T-cell (primary cell): ENCODE measurements at regions of chr17 and their contacts with region 1.

Region 1: GRCh38 chr17:65056262-65056638 is 290 bp downstream of the GNA13 start:
- DNase-seq: no peak
- ATAC-seq: peak; percentile 14 to 22 (median 20)
- H3K4me3 ChIP-seq: peak overlapping the region; percentile 90 to 96
- H3K4me3 Mint-ChIP-seq: peak overlapping the region; percentile 93 to 98 (median 97)
- H3K27ac ChIP-seq: peak overlapping the region; percentile 97
- H3K27ac Mint-ChIP-seq: peak overlapping the region; percentile 97 to 98
- H3K4me1 ChIP-seq: peaks cover 10 to 32% of the 10 kb centered on the region in 2 experiments
- H3K4me1 Mint-ChIP-seq: peaks cover 44 to 53% (median 47%) of the 10 kb centered on the region in 3 donors
- H3K27me3 ChIP-seq: peaks cover 0 to 5% of the 10 kb centered on the region in 2 experiments
- H3K27me3 Mint-ChIP-seq: no peaks in the 10 kb centered on the region

Region 2: DNA sequence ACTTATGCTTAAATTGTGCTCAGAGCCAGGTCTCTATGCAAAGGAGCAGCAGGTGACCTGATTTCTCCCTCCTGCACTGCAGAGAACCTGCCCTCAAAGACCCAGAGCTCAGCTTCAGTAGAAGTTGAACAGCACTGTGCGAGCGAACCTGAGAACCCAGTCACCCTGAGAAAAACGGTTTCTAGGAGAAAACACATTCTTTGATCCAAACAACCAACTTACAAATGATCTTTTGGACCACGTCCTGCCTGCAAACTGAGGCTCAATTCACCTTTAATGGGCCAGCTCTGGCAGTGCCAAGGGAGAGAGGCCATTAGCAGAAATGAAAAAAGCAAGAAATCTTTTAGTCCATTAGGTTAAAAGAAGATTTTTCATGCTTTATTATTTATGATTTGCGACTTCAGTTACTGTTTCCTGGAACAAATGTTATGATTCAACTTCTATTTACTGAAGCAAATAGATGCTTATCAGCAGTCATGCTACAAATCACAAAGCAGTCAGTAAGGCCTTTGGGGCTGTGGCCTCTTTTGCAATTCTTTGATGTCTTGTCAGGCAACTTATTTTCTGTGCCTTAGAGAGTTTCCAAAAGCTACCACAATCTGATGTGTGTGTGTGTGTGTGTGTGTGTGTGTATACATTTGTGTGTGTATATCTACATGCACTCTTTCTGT is 71.3 kb before region 1 on chr17:
- CTCF ChIA-PET with region 1: interaction called in 1 of 2 experiments, 3 read pairs
- POLR2A ChIA-PET with region 1: interaction called in 1 of 2 experiments, 13 read pairs
- DNase-seq: peak; percentile 9 to 82 (median 55)
- ATAC-seq: peak; percentile 58 to 78 (median 76)
- H3K4me3 ChIP-seq: peak overlapping the region in 1 of 2 donors; percentile 34
- H3K4me3 Mint-ChIP-seq: peak overlapping the region; percentile 69 to 83 (median 82)
- H3K27ac ChIP-seq: peak overlapping the region; percentile 98
- H3K27ac Mint-ChIP-seq: peak overlapping the region; percentile 99 to 100
- H3K4me1 ChIP-seq: peaks cover 23 to 41% of the 10 kb centered on the region in 2 experiments
- H3K4me1 Mint-ChIP-seq: peaks cover 36 to 57% (median 43%) of the 10 kb centered on the region in 3 donors
- H3K27me3 ChIP-seq: no peaks in the 10 kb centered on the region
- H3K27me3 Mint-ChIP-seq: no peaks in the 10 kb centered on the region

Region 3: DNA sequence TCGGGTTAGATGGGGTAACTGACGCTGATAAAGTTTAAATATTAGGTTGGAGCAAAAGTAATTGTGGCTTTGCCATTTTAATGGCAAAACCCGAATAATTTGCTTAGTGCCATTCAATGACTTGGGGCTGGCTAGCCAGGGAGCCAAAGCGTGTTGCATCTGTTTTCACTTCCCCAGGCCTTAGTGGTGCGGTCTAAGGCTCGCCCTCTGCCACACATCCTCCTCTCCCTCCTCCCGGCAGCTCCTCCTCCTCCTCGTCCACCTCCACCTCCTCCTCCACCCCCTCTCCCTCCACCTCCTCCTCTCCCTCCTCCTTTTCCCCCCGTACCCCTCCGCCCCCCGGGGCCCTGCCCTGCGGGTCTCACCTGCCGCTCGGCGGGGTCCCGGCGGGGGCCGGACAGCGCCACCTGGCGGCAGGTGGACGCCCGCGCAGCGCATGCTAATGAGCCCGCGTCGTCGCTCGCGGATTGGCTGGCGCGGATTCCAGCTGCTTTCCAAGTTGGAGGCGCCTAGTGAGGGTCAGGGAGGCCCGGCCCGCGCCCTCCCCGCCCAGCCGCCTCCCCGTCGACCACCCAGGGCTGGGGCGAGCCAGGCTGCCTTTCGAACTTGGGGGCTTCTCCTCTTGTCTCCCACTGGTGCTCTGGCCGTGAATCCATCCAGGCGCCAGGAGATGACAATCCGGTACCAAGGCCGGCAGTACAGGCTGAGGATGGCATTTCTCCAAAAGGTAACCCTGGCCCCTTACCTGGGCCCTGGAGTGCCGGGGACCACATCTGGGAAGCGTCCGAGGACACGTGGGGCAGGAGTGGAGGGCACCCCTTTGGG is 44.3 kb after region 1 on chr17:
- CTCF ChIA-PET with region 1: interaction called in 1 of 2 experiments, 12 read pairs
- POLR2A ChIA-PET with region 1: interaction called in 1 of 2 experiments, 4 read pairs
- DNase-seq: peak; percentile 59 to 91 (median 74)
- ATAC-seq: peak; percentile 91 to 95 (median 92)
- H3K4me3 ChIP-seq: peak overlapping the region; percentile 46 to 60
- H3K4me3 Mint-ChIP-seq: peak overlapping the region; percentile 74 to 87 (median 78)
- H3K27ac ChIP-seq: peak overlapping the region; percentile 71
- H3K27ac Mint-ChIP-seq: peak overlapping the region; percentile 87 to 93
- H3K4me1 ChIP-seq: peaks cover 3 to 17% of the 10 kb centered on the region in 2 experiments
- H3K4me1 Mint-ChIP-seq: peaks cover 15 to 32% (median 22%) of the 10 kb centered on the region in 3 donors
- H3K27me3 ChIP-seq: peaks cover 0 to 4% of the 10 kb centered on the region in 2 experiments
- H3K27me3 Mint-ChIP-seq: no peaks in the 10 kb centered on the region

Region 4: DNA sequence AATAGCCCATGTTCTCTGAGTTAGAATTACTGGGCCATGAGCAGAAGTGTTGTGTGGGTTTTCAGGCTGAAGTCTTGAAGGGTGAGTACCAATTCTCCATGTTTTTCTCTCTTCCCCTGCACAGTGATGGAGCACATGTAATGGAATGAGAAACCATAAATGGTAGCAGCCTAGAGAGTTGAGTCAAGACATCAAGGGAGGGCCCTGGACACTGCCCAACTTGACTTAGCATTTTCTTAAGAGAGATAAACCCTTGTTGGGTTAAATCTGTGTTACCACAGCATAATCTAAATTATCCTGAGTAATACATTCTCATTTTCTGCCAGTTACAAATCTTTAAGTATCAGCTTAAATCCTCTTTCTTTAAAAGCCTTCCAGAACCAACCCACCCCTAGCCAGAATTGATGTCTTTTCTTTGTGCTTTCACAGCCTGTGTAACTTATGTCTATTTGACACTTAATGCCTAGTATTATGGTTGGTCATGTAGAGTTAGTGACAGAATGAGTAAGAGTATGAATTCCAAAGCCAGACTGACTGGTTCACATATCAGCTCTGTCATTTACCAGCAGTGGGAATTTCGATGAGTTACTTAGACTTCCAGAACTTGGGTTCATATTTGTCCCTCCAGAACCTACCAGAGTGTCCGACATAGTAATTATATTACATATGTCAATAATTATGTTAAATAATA is 53.9 kb after region 1 on chr17:
- CTCF ChIA-PET with region 1: no interaction called
- POLR2A ChIA-PET with region 1: interaction called in 1 of 2 experiments, 11 read pairs
- DNase-seq: no peak
- ATAC-seq: no peak
- H3K4me3 ChIP-seq: no peak overlapping the region
- H3K4me3 Mint-ChIP-seq: no peak overlapping the region
- H3K27ac ChIP-seq: no peak overlapping the region
- H3K27ac Mint-ChIP-seq: no peak overlapping the region
- H3K4me1 ChIP-seq: no peaks in the 10 kb centered on the region
- H3K4me1 Mint-ChIP-seq: no peaks in the 10 kb centered on the region
- H3K27me3 ChIP-seq: peaks cover 0 to 4% of the 10 kb centered on the region in 2 experiments
- H3K27me3 Mint-ChIP-seq: peaks cover 0 to 14% of the 10 kb centered on the region in 2 donors

Region 5: GRCh38 chr17:65401561-65401960 is 345.3 kb after region 1 on chr17:
- CTCF ChIA-PET with region 1: no interaction called
- POLR2A ChIA-PET with region 1: no interaction called
- DNase-seq: no peak
- ATAC-seq: no peak
- H3K4me3 ChIP-seq: no peak overlapping the region
- H3K4me3 Mint-ChIP-seq: no peak overlapping the region
- H3K27ac ChIP-seq: no peak overlapping the region
- H3K27ac Mint-ChIP-seq: no peak overlapping the region
- H3K4me1 ChIP-seq: no peaks in the 10 kb centered on the region
- H3K4me1 Mint-ChIP-seq: peaks cover 5 to 11% (median 11%) of the 10 kb centered on the region in 3 donors
- H3K27me3 ChIP-seq: peaks cover 0 to 9% of the 10 kb centered on the region in 2 experiments
- H3K27me3 Mint-ChIP-seq: peaks cover 4 to 8% of the 10 kb centered on the region in 2 donors

Region 6: DNA sequence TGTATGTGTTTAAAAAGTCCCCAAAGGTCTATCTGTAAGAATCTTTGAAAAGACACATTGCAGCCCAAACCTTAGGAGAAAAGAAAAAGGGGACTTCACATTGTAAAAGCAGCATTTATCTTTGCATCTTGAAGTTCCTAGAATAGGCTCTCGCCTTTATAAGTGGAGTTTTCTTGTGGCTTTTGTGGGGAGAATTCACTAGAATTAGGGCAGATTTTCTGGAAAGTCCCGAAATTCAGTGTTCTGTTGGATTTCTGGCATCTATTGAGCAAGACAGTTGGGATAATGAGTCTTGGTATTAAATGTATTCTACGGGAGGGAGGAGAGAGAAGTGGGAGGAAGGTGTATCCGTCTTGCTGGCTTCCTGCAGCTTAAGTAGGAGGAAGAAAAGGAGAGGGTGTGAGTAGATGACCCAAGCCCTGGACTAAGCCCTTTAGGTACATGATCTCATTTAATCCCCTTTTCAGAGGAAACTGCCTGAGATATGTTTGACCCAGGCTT is 1308.8 kb after region 1 on chr17:
- CTCF ChIA-PET with region 1: no interaction called
- POLR2A ChIA-PET with region 1: no interaction called
- DNase-seq: peak in 1 of 35 experiments; percentile 19
- ATAC-seq: peak in 1 of 4 experiments; percentile 35
- H3K4me3 ChIP-seq: no peak overlapping the region
- H3K4me3 Mint-ChIP-seq: peak overlapping the region; percentile 13 to 51 (median 22)
- H3K27ac ChIP-seq: no peak overlapping the region
- H3K27ac Mint-ChIP-seq: peak overlapping the region; percentile 55 to 76
- H3K4me1 ChIP-seq: peaks cover 4 to 14% of the 10 kb centered on the region in 2 experiments
- H3K4me1 Mint-ChIP-seq: peaks cover 82 to 85% (median 85%) of the 10 kb centered on the region in 3 donors
- H3K27me3 ChIP-seq: no peaks in the 10 kb centered on the region
- H3K27me3 Mint-ChIP-seq: no peaks in the 10 kb centered on the region